ENCODE measurements at regions of chr17 and their contacts with region 1.

Region 1: DNA sequence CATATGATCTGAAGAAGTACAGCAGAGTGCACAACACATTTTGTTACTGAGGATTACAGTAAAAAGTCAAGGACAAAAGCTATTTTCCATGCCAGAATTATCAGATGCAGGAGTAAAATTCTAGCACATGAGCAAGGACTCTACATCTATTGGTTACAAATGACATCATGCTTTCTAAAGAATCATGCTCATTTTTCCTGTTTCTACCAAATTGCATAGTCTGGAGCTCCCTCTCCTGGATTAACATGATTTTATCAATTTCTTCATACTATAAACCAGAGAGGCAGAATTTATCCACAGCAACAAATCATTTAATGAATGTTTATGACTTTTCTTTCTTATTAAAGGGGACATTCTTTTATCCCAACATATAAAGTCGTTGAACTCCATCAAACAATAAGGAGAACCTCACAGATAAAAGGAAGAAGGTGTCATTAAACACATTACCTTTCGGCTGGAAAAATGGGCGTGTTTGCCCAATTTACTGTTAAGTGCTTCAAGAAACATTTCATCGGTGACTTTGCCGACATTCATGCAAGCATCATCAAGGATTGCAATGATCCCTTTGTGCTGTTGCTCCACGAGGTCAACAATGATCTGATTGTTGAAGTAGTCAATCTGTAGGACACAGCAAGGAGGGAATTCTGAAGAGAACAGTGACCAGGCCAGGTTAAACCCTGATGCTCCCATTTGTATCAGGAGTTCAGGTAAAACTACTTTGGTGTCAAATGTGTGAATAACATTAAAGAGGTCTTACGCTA is 121.7 kb downstream of the MYO1D start:
- DNase-seq: peak; percentile 46
- CTCF ChIP-seq: peak; percentile 38

Region 2: DNA sequence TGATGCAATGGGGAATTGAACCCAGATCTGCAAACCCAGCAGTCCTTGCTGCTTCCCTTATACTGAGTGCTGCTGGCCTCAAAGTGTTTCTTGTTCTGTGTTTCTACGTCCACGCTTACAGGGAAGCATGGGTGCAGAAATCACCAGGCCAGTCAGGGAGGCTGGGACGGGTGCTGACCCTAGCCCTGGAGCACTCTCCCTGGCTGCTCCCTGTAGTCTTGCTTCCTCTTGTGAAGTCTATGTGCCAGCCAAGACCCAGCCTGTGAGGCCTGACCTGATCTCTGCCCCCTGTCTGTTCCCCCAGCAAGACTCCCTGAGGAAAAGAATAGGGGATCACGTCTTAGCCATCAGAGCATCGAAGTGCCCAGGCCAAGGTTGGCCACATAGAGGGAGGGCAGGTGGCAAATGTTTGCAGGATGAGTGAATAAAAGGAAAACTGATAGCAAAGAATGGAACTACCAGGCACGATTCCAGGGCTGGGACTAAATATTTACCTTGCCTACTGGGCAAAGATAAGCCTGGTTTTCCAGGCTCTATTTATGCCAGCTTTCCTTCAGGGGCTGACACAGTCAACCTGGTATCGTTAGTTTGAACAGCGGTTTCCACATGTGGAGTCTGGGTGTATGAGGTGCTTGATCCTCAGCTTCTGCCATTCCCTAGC is 654.1 kb before region 1 on chr17:
- in situ Hi-C with region 1: no loop called
- DNase-seq: no peak
- CTCF ChIP-seq: no peak

Region 3: GRCh38 chr17:32479074-32479617 is 276.1 kb before region 1 on chr17:
- in situ Hi-C with region 1: loop called (anchors 10 kb)
- DNase-seq: no peak
- CTCF ChIP-seq: no peak

Region 4: GRCh38 chr17:32659419-32659842 is 95.8 kb before region 1 on chr17:
- in situ Hi-C with region 1: loop called (anchors 10 kb)
- DNase-seq: peak; percentile 80
- CTCF ChIP-seq: peak; percentile 85

Region 5: DNA sequence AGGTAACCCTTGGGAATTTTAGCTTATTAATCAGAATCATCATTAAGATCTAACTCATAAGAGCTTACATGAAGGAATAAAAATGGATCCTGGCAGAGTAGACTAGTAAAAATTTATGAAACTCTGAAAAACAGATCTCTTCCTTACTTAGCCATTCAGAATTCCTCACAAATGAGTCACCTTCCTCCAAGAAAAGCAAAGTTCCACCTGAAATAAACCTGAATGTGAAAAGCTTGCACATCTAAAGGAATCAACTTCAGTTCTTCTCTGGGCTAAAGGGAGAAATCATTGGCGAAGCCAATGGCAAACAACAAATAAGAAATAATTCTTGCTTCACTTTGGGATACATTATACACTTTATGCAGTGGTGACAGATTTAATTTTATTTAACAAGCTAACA is 99.0 kb after region 1 on chr17:
- in situ Hi-C with region 1: no loop called
- DNase-seq: no peak
- CTCF ChIP-seq: no peak